Heart left ventricle (tissue), 16 donors: ENCODE measurements at regions of chr17 and their contacts with region 1.

Region 1: GRCh38 chr17:45021607-45022287 is 29.7 kb downstream of the DCAKD start:
- DNase-seq: peak; percentile 67 to 87 (median 73)
- ATAC-seq: peak in 3 of 4 donors; percentile 80 to 82 (median 82)
- H3K4me3 ChIP-seq: peak overlapping the region in 11 of 12 donors; percentile 29 to 68 (median 46)
- H3K27ac ChIP-seq: peak overlapping the region in 11 of 12 donors; percentile 1 to 79 (median 68)
- H3K4me1 ChIP-seq: peaks cover 0 to 46% (median 31%) of the 10 kb centered on the region in 12 donors
- H3K27me3 ChIP-seq: peaks cover 0 to 27% (median 0%) of the 10 kb centered on the region in 9 donors
- CTCF ChIP-seq: peak; percentile 67 to 98 (median 96)
- POLR2A ChIP-seq: peak in 1 of 2 donors; percentile 14

Region 2: DNA sequence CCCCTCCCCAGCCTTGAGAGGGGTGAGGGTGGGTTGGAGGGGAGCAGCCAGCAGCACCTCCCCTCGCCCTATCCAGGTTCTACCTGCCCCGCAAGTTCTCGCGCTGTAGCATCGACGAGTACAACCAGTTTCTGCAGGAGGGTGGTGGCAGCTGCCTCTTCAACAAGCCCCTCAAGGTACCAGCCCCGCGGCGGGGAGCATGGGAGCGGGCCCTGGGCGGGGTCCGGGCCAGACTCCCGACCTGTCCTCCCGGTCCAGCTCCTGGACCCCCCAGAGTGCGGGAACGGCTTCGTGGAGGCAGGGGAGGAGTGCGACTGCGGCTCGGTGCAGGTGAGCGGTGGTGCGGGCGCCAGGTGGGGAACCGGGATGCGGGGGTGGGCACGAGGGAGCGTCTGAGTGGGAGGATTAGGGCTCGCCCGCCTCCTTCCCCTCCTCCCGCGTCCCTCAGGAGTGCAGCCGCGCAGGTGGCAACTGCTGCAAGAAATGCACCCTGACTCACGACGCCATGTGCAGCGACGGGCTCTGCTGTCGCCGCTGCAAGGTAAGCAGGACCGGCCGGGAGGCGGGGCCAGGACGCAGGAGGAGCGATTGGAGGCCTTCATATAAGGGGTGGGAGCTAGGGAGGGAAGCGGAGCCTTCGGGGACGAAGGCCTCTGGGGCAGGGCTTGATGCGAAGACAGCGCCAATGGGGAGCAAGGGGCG is 246.5 kb before region 1 on chr17:
- intact Hi-C with region 1: loop called in 7 of 10 experiments (anchors 2 to 10 kb)
- DNase-seq: peak in 4 of 5 donors; percentile 96 to 98 (median 96)
- ATAC-seq: peak; percentile 93 to 94 (median 94)
- H3K4me3 ChIP-seq: peak overlapping the region; percentile 31 to 74 (median 63)
- H3K27ac ChIP-seq: peak overlapping the region in 6 of 12 donors; percentile 7 to 82 (median 36)
- H3K4me1 ChIP-seq: peaks cover 0 to 30% (median 21%) of the 10 kb centered on the region in 12 donors
- H3K27me3 ChIP-seq: no peaks in the 10 kb centered on the region
- CTCF ChIP-seq: peak in 3 of 12 donors; percentile 3 to 38 (median 7)
- POLR2A ChIP-seq: no peak

Region 3: GRCh38 chr17:44919885-44920564 is 101.7 kb before region 1 on chr17:
- intact Hi-C with region 1: loop called (anchors 1 to 2 kb)
- DNase-seq: peak; percentile 79 to 88 (median 84)
- ATAC-seq: peak; percentile 69 to 85 (median 84)
- H3K4me3 ChIP-seq: no peak overlapping the region
- H3K27ac ChIP-seq: peak overlapping the region in 5 of 12 donors; percentile 17 to 74 (median 70)
- H3K4me1 ChIP-seq: peaks cover 0 to 38% (median 16%) of the 10 kb centered on the region in 12 donors
- H3K27me3 ChIP-seq: peaks cover 0 to 4% (median 0%) of the 10 kb centered on the region in 9 donors
- CTCF ChIP-seq: peak; percentile 70 to 90 (median 84)
- POLR2A ChIP-seq: no peak

Region 4: GRCh38 chr17:44981221-44981968 is 40.4 kb before region 1 on chr17:
- intact Hi-C with region 1: loop called in 3 of 10 experiments (anchors 2 to 5 kb)
- DNase-seq: no peak
- ATAC-seq: no peak
- H3K4me3 ChIP-seq: no peak overlapping the region
- H3K27ac ChIP-seq: peak overlapping the region in 10 of 12 donors; percentile 32 to 89 (median 78)
- H3K4me1 ChIP-seq: peaks cover 0 to 59% (median 18%) of the 10 kb centered on the region in 12 donors
- H3K27me3 ChIP-seq: peaks cover 0 to 25% (median 0%) of the 10 kb centered on the region in 9 donors
- CTCF ChIP-seq: no peak
- POLR2A ChIP-seq: no peak

Region 5: GRCh38 chr17:45063198-45063597 is 41.5 kb after region 1 on chr17:
- intact Hi-C with region 1: no loop called
- DNase-seq: no peak
- ATAC-seq: no peak
- H3K4me3 ChIP-seq: peak overlapping the region in 1 of 12 donors; percentile 7
- H3K27ac ChIP-seq: peak overlapping the region in 1 of 12 donors; percentile 51
- H3K4me1 ChIP-seq: peaks cover 2 to 77% (median 44%) of the 10 kb centered on the region in 12 donors
- H3K27me3 ChIP-seq: no peaks in the 10 kb centered on the region
- CTCF ChIP-seq: no peak
- POLR2A ChIP-seq: no peak

Region 6: GRCh38 chr17:45098869-45099616 is 77.3 kb after region 1 on chr17:
- intact Hi-C with region 1: loop called in 3 of 10 experiments (anchors 5 to 10 kb)
- DNase-seq: peak; percentile 82 to 93 (median 84)
- ATAC-seq: peak; percentile 55 to 83 (median 75)
- H3K4me3 ChIP-seq: no peak overlapping the region
- H3K27ac ChIP-seq: peak overlapping the region in 5 of 12 donors; percentile 29 to 72 (median 42)
- H3K4me1 ChIP-seq: peaks cover 0 to 48% (median 19%) of the 10 kb centered on the region in 12 donors
- H3K27me3 ChIP-seq: no peaks in the 10 kb centered on the region
- CTCF ChIP-seq: peak; percentile 85 to 96 (median 90)
- POLR2A ChIP-seq: no peak

Region 7: DNA sequence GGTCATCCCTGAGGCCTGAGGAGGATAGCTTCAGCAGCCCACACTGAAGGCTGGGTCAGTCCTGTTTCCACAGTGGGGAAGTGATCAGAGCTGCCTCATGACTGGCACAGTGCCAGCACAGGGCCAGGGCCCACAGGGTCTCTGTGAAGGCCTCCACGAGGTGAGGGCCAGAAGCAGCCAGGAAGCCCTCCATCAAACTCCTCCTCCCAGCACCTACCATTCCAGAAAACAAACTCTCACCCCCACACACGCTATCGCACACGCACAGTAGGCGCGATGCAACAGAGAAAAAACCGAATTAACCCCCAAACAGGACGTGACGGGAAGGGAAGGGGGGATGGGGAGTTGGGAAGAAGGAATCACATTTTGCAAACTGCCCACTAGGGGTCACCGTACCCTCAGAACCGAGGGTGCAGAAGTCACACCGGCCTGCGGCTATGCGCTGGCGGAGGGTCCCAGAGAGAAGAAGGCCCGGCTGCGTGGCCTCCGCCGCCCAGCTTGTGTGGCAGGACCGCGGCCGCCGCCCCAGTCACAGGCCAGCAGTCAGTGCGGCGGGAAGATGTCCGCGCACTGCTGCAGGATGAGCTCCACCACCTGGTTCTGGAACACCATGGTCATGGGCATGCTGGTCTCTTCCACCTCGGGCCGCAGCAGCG is 373.3 kb after region 1 on chr17:
- intact Hi-C with region 1: no loop called
- DNase-seq: peak; percentile 71 to 83 (median 77)
- ATAC-seq: peak; percentile 29 to 71 (median 63)
- H3K4me3 ChIP-seq: peak overlapping the region in 10 of 12 donors; percentile 2 to 42 (median 30)
- H3K27ac ChIP-seq: no peak overlapping the region
- H3K4me1 ChIP-seq: peaks cover 0 to 19% (median 4%) of the 10 kb centered on the region in 12 donors
- H3K27me3 ChIP-seq: no peaks in the 10 kb centered on the region
- CTCF ChIP-seq: peak; percentile 61 to 82 (median 72)
- POLR2A ChIP-seq: no peak